ENCODE measurements at regions of chr5 and their contacts with region 1.

Region 1: DNA sequence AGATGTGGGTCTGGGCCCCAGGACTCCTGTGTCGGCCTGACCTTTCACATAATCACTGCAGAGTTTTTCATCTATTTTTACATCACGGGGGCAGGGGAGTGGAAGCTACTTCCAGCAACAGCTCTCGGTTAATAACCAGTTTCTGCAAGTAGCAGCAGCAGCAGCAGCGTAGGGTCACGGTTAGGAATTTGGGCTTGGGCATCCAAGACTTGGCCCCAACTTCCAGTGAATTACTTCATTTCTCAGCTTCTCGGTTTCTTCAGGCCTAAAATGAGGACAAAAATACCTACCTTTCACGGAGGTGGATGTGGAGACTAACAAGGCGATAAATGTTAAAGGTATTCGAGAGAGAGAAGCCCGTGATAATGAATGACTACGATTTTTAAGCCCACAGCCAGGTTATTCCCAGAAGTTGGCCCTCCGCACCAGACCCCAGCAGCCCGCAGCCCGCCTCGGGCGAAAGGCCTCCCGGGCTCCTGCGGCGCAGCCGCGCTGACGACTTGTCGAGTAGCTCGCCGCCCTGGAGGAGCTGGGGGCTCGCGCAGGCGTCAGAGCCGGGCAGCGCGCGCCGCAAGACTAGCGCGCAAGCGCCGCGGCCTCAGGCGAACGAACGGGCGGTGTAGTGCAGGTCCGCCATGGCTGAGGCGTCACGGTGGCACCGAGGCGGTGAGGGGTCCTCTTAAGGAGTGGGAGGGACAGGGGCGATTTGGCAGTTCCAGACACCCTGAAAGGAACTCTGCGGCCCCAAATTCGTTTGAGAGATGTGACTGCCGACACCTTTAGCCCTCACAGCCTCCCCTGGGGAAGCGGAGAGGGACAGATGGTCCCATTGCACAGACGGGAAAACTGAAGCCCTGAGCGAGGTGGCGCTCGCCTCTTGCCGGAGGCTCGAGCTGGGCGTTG is at the start of gene PKD2L2:
- DNase-seq: peak; percentile 84
- ATAC-seq: peak; percentile 98
- H3K4me3 Mint-ChIP-seq: peak within 1 kb of the TSS; percentile 92
- H3K27ac Mint-ChIP-seq: peak within 1 kb of the TSS; percentile 96
- H3K4me1 Mint-ChIP-seq: peaks cover 32% of the 10 kb centered on the region
- H3K27me3 Mint-ChIP-seq: no peaks in the 10 kb centered on the region
- CTCF ChIP-seq: no peak
- total RNA-seq, gene PKD2L2: not detected in 2 replicates

Region 2: GRCh38 chr5:137849973-137850372 is 39.1 kb before region 1 on chr5:
- CTCF ChIA-PET with region 1: no interaction called
- POLR2A ChIA-PET with region 1: interaction called, 4 read pairs
- intact Hi-C with region 1: loop called (anchors 5 kb)
- DNase-seq: no peak
- ATAC-seq: no peak
- H3K4me3 Mint-ChIP-seq: no peak overlapping the region
- H3K27ac Mint-ChIP-seq: no peak overlapping the region
- H3K4me1 Mint-ChIP-seq: peaks cover 3% of the 10 kb centered on the region
- H3K27me3 Mint-ChIP-seq: no peaks in the 10 kb centered on the region
- CTCF ChIP-seq: no peak

Region 3: GRCh38 chr5:137858223-137858916 is 30.7 kb before region 1 on chr5:
- CTCF ChIA-PET with region 1: no interaction called
- POLR2A ChIA-PET with region 1: interaction called, 14 read pairs
- intact Hi-C with region 1: loop called (anchors 5 kb)
- DNase-seq: no peak
- ATAC-seq: peak; percentile 91
- H3K4me3 Mint-ChIP-seq: peak overlapping the region; percentile 61
- H3K27ac Mint-ChIP-seq: peak overlapping the region; percentile 74
- H3K4me1 Mint-ChIP-seq: peaks cover 31% of the 10 kb centered on the region
- H3K27me3 Mint-ChIP-seq: no peaks in the 10 kb centered on the region
- CTCF ChIP-seq: no peak

Region 4: DNA sequence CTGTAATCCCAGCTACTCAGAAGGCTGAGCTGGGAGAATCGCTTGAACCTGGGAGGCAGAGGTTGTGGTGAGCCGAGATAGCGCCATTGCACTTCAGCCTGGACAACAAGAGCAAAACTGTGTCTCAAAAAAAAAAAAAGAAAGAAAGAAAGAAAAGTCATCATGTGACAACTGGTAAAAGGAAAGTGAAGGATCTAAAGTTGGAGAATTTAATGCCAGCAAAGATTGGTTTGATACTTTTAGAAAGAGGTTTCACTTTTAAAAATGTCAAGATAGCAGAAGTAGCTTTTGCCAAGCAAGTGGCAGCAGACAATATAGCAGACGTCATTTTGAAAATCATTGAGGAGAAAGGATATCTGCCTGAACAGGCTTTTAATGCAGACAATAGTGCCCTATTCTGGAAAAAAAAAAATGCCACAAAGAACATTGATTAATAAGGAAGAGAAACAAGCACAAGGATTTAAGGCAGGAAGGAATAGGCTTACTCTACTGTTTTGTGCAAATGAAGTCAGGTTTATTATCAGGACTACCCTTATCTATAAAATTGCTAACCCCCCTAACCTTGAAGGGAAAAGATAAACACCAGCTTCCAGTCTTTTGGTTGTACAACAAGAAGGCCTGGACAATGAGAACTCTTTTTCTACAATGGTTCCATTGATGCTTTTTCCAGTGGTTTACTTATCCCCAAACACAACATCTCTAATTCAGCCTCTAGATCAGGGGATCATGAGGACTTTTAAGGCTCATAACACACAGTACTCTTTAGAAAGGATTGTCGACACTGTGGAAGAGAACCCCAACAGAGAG is 12.1 kb after region 1 on chr5:
- CTCF ChIA-PET with region 1: interaction called, 3 read pairs
- POLR2A ChIA-PET with region 1: interaction called, 46 read pairs
- intact Hi-C with region 1: loop called (anchors 1 kb)
- DNase-seq: no peak
- ATAC-seq: no peak
- H3K4me3 Mint-ChIP-seq: peak overlapping the region; percentile 54
- H3K27ac Mint-ChIP-seq: peak overlapping the region; percentile 64
- H3K4me1 Mint-ChIP-seq: peaks cover 61% of the 10 kb centered on the region
- H3K27me3 Mint-ChIP-seq: no peaks in the 10 kb centered on the region
- CTCF ChIP-seq: no peak

Region 5: DNA sequence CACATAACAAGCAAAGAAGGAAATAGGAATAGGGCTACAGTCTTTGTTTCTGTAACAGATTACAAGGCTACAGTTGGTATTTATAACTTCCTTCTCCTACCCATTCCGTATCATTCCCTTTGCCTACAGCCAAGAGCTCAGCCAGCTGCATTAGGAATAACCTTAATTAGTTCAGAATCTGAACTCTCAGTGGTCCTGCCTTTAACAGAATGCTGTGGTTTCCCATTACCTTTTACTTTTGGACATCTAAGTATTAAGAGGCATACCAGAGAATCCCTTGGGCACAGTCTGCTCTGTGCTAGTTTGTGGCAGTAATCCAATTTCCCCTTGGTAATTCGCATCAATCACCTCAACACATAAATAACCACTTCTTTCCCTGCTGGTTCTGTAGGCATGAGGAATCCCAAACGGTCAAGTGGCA is 44.4 kb after region 1 on chr5:
- CTCF ChIA-PET with region 1: interaction called, 8 read pairs
- POLR2A ChIA-PET with region 1: interaction called, 13 read pairs
- intact Hi-C with region 1: loop called (anchors 5 kb)
- DNase-seq: no peak
- ATAC-seq: no peak
- H3K4me3 Mint-ChIP-seq: no peak overlapping the region
- H3K27ac Mint-ChIP-seq: peak overlapping the region; percentile 6
- H3K4me1 Mint-ChIP-seq: peaks cover 18% of the 10 kb centered on the region
- H3K27me3 Mint-ChIP-seq: no peaks in the 10 kb centered on the region
- CTCF ChIP-seq: no peak

Region 6: GRCh38 chr5:137954131-137954879 is 65.2 kb after region 1 on chr5:
- CTCF ChIA-PET with region 1: no interaction called
- POLR2A ChIA-PET with region 1: no interaction called
- intact Hi-C with region 1: no loop called
- DNase-seq: no peak
- ATAC-seq: no peak
- H3K4me3 Mint-ChIP-seq: no peak overlapping the region
- H3K27ac Mint-ChIP-seq: peak overlapping the region; percentile 35
- H3K4me1 Mint-ChIP-seq: no peaks in the 10 kb centered on the region
- H3K27me3 Mint-ChIP-seq: no peaks in the 10 kb centered on the region
- CTCF ChIP-seq: no peak

Region 7: DNA sequence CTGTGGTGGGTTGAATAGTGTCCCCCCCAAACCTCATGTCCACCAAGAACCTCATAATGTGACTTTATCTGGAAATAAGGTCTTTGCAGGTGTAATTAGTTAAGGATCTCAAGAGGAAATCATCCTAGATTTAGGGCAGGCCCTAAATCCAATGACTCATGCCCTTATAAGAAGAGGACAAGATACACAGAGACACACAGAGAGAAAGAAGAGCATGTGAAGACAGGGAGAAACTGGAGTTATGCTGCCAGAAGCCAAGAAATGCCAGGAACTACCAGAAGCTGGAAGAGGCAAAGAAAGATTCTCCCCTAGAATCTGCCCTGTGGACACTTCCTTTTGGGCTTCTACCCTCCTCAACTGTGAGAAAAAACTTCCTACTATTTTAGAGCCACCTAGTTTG is 135.0 kb after region 1 on chr5:
- CTCF ChIA-PET with region 1: no interaction called
- POLR2A ChIA-PET with region 1: interaction called, 6 read pairs
- intact Hi-C with region 1: loop called (anchors 2 kb)
- DNase-seq: no peak
- ATAC-seq: no peak
- H3K4me3 Mint-ChIP-seq: no peak overlapping the region
- H3K27ac Mint-ChIP-seq: no peak overlapping the region
- H3K4me1 Mint-ChIP-seq: peaks cover 78% of the 10 kb centered on the region
- H3K27me3 Mint-ChIP-seq: no peaks in the 10 kb centered on the region
- CTCF ChIP-seq: no peak

Region 8: GRCh38 chr5:138331449-138332368 is 442.6 kb after region 1 on chr5 and contains the start of gene CDC25C:
- CTCF ChIA-PET with region 1: no interaction called
- POLR2A ChIA-PET with region 1: no interaction called
- intact Hi-C with region 1: loop called (anchors 10 kb)
- DNase-seq: peak; percentile 83
- ATAC-seq: peak; percentile 100
- H3K4me3 Mint-ChIP-seq: peak within 1 kb of the TSS; percentile 92
- H3K27ac Mint-ChIP-seq: peak within 1 kb of the TSS; percentile 78
- H3K4me1 Mint-ChIP-seq: peaks cover 15% of the 10 kb centered on the region
- H3K27me3 Mint-ChIP-seq: no peaks in the 10 kb centered on the region
- CTCF ChIP-seq: no peak
- total RNA-seq, gene CDC25C: 0.42 TPM in 1 of 2 replicates, not detected in the other

Region 9: GRCh38 chr5:139660923-139661814 is 1772.1 kb after region 1 on chr5:
- CTCF ChIA-PET with region 1: no interaction called
- POLR2A ChIA-PET with region 1: no interaction called
- intact Hi-C with region 1: no loop called
- DNase-seq: peak; percentile 69
- ATAC-seq: peak; percentile 71
- H3K4me3 Mint-ChIP-seq: peak overlapping the region; percentile 75
- H3K27ac Mint-ChIP-seq: peak overlapping the region; percentile 96
- H3K4me1 Mint-ChIP-seq: peaks cover 94% of the 10 kb centered on the region
- H3K27me3 Mint-ChIP-seq: no peaks in the 10 kb centered on the region
- CTCF ChIP-seq: no peak

Measured in activated B cell treated with CpG ODN at 0.5 μM for 24 hours (primary cell).